MCF 10A (cell line): ENCODE measurements at regions of chr20 and their contacts with region 1.

Region 1: GRCh38 chr20:49132995-49133478 is 55.1 kb downstream of the STAU1 start:
- DNase-seq: peak; percentile 79
- H3K4me3 Mint-ChIP-seq: no peak overlapping the region
- H3K27ac Mint-ChIP-seq: no peak overlapping the region
- H3K4me1 Mint-ChIP-seq: peaks cover 6% of the 10 kb centered on the region
- H3K27me3 Mint-ChIP-seq: no peaks in the 10 kb centered on the region
- CTCF ChIP-seq: peak; percentile 55

Region 2: DNA sequence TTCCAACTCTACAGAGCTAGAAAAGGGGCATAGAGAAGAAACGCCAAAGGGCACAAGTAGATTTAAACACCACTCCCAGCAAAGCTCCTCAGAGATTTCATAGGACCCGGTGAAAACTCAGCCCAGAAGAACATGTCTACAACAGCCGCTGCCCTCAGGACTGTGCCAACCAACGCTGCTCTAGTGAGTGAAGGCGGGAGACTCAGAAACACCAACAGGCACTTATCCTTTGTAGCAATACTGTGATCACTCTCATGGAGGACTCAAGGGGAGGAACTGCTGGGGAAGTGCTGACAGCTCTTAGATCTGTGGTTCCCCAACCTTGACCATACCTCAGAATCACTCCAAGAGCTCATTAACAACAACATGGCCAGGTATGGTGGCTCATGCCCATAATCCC is 15.6 kb after region 1 on chr20:
- CTCF ChIA-PET with region 1: interaction called, 14 read pairs
- POLR2A ChIA-PET with region 1: interaction called, 4 read pairs
- intact Hi-C with region 1: no loop called
- DNase-seq: no peak
- H3K4me3 Mint-ChIP-seq: no peak overlapping the region
- H3K27ac Mint-ChIP-seq: no peak overlapping the region
- H3K4me1 Mint-ChIP-seq: peaks cover 7% of the 10 kb centered on the region
- H3K27me3 Mint-ChIP-seq: no peaks in the 10 kb centered on the region
- CTCF ChIP-seq: no peak

Region 3: DNA sequence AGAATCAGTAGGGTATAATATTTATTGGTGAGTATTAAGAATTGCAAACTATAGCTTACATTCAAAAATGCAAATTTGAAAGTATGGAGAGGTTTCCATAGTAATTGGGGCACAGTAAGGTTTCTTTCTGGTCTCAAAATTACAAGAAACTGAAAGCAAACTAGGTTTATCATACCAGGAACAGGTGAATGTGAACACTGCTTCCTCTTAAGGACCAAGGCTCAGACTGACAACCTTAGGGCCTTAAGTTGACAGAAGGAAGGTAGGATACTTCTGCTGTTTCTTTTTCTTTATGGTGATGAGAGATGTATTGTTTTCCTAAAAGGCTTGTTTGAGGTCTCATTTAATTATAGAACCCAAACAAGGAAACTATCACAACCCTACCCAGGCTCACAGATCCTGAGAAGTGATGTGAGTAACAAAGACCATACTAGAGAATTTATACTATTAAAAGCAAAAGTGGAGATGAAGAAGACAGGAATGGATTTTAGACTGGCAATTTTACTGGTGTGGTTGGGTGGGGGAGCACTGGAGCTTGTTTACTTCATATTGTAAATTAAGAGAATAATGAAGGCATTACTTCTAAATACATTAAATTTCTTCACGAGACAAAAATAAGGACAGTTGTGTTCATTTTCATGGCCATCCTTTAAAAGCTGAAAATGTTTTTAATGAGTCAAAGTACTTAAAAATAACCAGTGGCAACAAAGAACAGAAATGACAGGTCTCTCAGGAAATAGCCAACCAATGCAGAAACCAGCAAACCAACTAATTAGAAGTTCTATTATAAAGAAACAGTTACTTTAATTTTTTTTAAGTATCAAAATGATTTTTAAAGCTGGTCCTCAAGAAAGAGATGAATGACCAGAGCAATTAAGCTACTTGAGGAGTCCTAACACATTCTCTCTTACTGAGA is 33.8 kb after region 1 on chr20:
- CTCF ChIA-PET with region 1: interaction called, 20 read pairs
- POLR2A ChIA-PET with region 1: interaction called, 4 read pairs
- intact Hi-C with region 1: no loop called
- DNase-seq: no peak
- H3K4me3 Mint-ChIP-seq: no peak overlapping the region
- H3K27ac Mint-ChIP-seq: peak overlapping the region; percentile 57
- H3K4me1 Mint-ChIP-seq: peaks cover 11% of the 10 kb centered on the region
- H3K27me3 Mint-ChIP-seq: no peaks in the 10 kb centered on the region
- CTCF ChIP-seq: no peak

Region 4: GRCh38 chr20:49179368-49180277 is 46.6 kb after region 1 on chr20:
- CTCF ChIA-PET with region 1: interaction called, 10 read pairs
- POLR2A ChIA-PET with region 1: no interaction called
- intact Hi-C with region 1: no loop called
- DNase-seq: peak; percentile 11
- H3K4me3 Mint-ChIP-seq: no peak overlapping the region
- H3K27ac Mint-ChIP-seq: peak overlapping the region; percentile 19
- H3K4me1 Mint-ChIP-seq: peaks cover 8% of the 10 kb centered on the region
- H3K27me3 Mint-ChIP-seq: no peaks in the 10 kb centered on the region
- CTCF ChIP-seq: no peak

Region 5: GRCh38 chr20:49186535-49187329 is 53.7 kb after region 1 on chr20:
- CTCF ChIA-PET with region 1: interaction called, 6 read pairs
- POLR2A ChIA-PET with region 1: interaction called, 14 read pairs
- intact Hi-C with region 1: no loop called
- DNase-seq: peak; percentile 68
- H3K4me3 Mint-ChIP-seq: peak overlapping the region; percentile 83
- H3K27ac Mint-ChIP-seq: peak overlapping the region; percentile 75
- H3K4me1 Mint-ChIP-seq: peaks cover 6% of the 10 kb centered on the region
- H3K27me3 Mint-ChIP-seq: no peaks in the 10 kb centered on the region
- CTCF ChIP-seq: no peak

Region 6: GRCh38 chr20:49323622-49324238 is 190.7 kb after region 1 on chr20:
- CTCF ChIA-PET with region 1: interaction called, 7 read pairs
- POLR2A ChIA-PET with region 1: no interaction called
- intact Hi-C with region 1: loop called (anchors 5 kb)
- DNase-seq: peak; percentile 76
- H3K4me3 Mint-ChIP-seq: no peak overlapping the region
- H3K27ac Mint-ChIP-seq: no peak overlapping the region
- H3K4me1 Mint-ChIP-seq: no peaks in the 10 kb centered on the region
- H3K27me3 Mint-ChIP-seq: peaks cover 7% of the 10 kb centered on the region
- CTCF ChIP-seq: peak; percentile 35